ENCODE measurements at regions of chr9 and their contacts with region 1.

Region 1: GRCh38 chr9:92716557-92716956 is 46.6 kb upstream of the IPPK start:
- DNase-seq: peak; percentile 59 to 84 (median 65)
- ATAC-seq: peak; percentile 18 to 48 (median 36)
- H3K4me3 ChIP-seq: no peak overlapping the region
- H3K27ac ChIP-seq: peak overlapping the region in 9 of 12 donors; percentile 15 to 78 (median 60)
- H3K4me1 ChIP-seq: peaks cover 11 to 27% (median 20%) of the 10 kb centered on the region in 12 donors
- H3K27me3 ChIP-seq: no peaks in the 10 kb centered on the region
- CTCF ChIP-seq: peak; percentile 87 to 96 (median 91)
- POLR2A ChIP-seq: no peak

Region 2: GRCh38 chr9:92266486-92266885 is 450.1 kb before region 1 on chr9:
- intact Hi-C with region 1: no loop called
- DNase-seq: peak in 1 of 5 donors; percentile 41
- ATAC-seq: peak in 2 of 4 donors; percentile 55 to 74
- H3K4me3 ChIP-seq: no peak overlapping the region
- H3K27ac ChIP-seq: no peak overlapping the region
- H3K4me1 ChIP-seq: no peaks in the 10 kb centered on the region
- H3K27me3 ChIP-seq: no peaks in the 10 kb centered on the region
- CTCF ChIP-seq: no peak
- POLR2A ChIP-seq: no peak

Region 3: GRCh38 chr9:92558612-92559374 is 157.8 kb before region 1 on chr9:
- intact Hi-C with region 1: no loop called
- DNase-seq: peak in 1 of 5 donors; percentile 49
- ATAC-seq: no peak
- H3K4me3 ChIP-seq: no peak overlapping the region
- H3K27ac ChIP-seq: no peak overlapping the region
- H3K4me1 ChIP-seq: peaks cover 0 to 20% (median 3%) of the 10 kb centered on the region in 12 donors
- H3K27me3 ChIP-seq: no peaks in the 10 kb centered on the region
- CTCF ChIP-seq: no peak
- POLR2A ChIP-seq: no peak

Region 4: DNA sequence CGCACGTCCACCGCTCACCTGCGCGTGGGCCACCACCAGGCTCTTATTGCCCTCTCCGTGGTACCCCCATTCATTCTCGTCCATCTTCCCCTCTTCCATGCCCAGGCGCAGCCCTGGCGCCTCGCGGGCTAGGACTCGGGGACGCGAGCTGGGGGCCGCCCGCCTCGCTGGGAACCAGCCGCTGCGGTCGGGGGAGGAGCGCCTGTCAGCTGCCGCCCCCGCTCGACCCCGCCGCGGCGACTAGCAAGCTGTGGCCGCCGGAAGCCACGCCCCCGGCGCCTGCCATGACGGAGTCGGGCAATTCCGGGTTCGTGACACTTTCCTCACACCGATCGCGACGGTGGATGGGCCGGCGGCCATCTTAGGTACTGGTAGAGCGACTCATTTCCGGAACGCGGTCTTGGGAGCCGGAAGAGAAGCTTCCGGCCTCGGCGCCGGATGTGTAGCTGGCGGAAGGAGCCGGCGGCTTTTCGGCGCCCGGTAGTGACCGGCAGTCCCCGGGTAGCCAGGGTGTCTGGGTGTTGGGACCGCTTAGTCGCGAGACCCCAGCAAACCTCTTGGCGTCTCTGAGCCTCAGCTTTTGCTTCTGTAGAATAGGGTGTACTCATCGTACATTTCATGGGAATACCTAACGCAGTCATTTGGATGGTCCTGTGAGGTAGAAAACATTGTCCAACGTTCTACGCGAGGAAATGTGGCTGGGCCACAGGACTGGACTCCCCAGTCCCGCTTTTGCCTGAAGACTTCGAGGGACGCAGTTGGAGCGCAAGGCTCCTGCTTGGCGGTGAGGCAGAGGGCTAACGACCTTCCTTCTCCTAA is 46.5 kb before region 1 on chr9 and contains the start of gene IPPK:
- intact Hi-C with region 1: loop called in 3 of 10 experiments (anchors 5 to 10 kb)
- DNase-seq: peak; percentile 98 to 100 (median 99)
- ATAC-seq: peak; percentile 94 to 98 (median 96)
- H3K4me3 ChIP-seq: peak within 1 kb of the TSS; percentile 48 to 98 (median 88)
- H3K27ac ChIP-seq: peak within 1 kb of the TSS; percentile 80 to 98 (median 93)
- H3K4me1 ChIP-seq: peaks cover 0 to 48% (median 28%) of the 10 kb centered on the region in 12 donors
- H3K27me3 ChIP-seq: no peaks in the 10 kb centered on the region
- CTCF ChIP-seq: no peak
- POLR2A ChIP-seq: peak; percentile 19 to 64
- total RNA-seq, gene IPPK: 5.8 to 10.1 (median 8.6) TPM

Region 5: GRCh38 chr9:92749934-92750315 is 33.4 kb after region 1 on chr9:
- intact Hi-C with region 1: loop called in 2 of 10 experiments (anchors 5 kb)
- DNase-seq: no peak
- ATAC-seq: peak in 2 of 4 donors; percentile 33 to 61
- H3K4me3 ChIP-seq: no peak overlapping the region
- H3K27ac ChIP-seq: peak overlapping the region in 11 of 12 donors; percentile 6 to 71 (median 45)
- H3K4me1 ChIP-seq: peaks cover 17 to 90% (median 61%) of the 10 kb centered on the region in 12 donors
- H3K27me3 ChIP-seq: no peaks in the 10 kb centered on the region
- CTCF ChIP-seq: no peak
- POLR2A ChIP-seq: no peak

Region 6: DNA sequence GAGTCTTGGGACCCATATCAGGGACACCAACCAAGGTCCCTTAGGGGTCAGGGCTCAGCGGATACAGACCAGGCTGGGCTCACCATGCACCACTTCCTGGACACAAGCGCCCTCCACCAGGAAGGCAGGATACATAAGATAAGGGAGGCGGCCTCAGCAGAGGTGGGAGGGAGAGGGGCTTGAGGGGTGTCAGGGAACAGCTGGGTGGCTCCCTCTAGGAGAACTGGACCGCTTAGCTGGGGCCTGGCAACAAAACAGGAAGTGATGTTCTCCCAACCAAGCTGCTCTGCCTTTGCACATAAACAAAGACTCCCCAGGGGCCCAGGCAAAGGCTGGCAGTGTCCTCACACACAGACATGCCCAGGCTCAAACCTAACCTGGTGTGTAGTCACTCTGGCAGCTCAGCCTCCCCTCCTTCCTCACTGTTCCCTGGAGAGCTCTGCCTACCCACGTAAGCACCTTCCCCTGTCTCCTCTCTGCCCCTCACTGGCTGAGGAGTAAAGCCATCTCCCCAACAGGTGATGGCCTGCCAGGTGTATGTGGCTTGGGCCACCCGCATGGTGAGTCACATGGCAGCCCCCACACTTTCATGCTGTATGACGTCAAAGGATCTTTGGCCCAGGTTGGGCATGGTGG is 53.9 kb after region 1 on chr9:
- intact Hi-C with region 1: loop called in 4 of 10 experiments (anchors 2 to 5 kb)
- DNase-seq: peak in 1 of 5 donors; percentile 30
- ATAC-seq: peak in 3 of 4 donors; percentile 4 to 19 (median 18)
- H3K4me3 ChIP-seq: no peak overlapping the region
- H3K27ac ChIP-seq: peak overlapping the region in 9 of 12 donors; percentile 42 to 72 (median 60)
- H3K4me1 ChIP-seq: peaks cover 3 to 36% (median 24%) of the 10 kb centered on the region in 12 donors
- H3K27me3 ChIP-seq: no peaks in the 10 kb centered on the region
- CTCF ChIP-seq: peak in 1 of 12 donors; percentile 10
- POLR2A ChIP-seq: no peak

Region 7: GRCh38 chr9:93268551-93269314 is 552.2 kb after region 1 on chr9:
- intact Hi-C with region 1: no loop called
- DNase-seq: no peak
- ATAC-seq: no peak
- H3K4me3 ChIP-seq: no peak overlapping the region
- H3K27ac ChIP-seq: no peak overlapping the region
- H3K4me1 ChIP-seq: peaks cover 0 to 15% (median 2%) of the 10 kb centered on the region in 12 donors
- H3K27me3 ChIP-seq: peaks cover 0 to 3% (median 0%) of the 10 kb centered on the region in 9 donors
- CTCF ChIP-seq: no peak
- POLR2A ChIP-seq: no peak

Measured in heart left ventricle (tissue), 16 donors.